ENCODE measurements at regions of chr6 and their contacts with region 1.

Region 1: GRCh38 chr6:25278914-25279747 is at the start of gene CARMIL1:
- DNase-seq: peak; percentile 99
- H3K4me3 Mint-ChIP-seq: peak within 1 kb of the TSS; percentile 76
- H3K27ac Mint-ChIP-seq: peak within 1 kb of the TSS; percentile 90
- H3K4me1 Mint-ChIP-seq: peaks cover 61% of the 10 kb centered on the region
- H3K27me3 Mint-ChIP-seq: no peaks in the 10 kb centered on the region
- CTCF ChIP-seq: peak; percentile 97
- total RNA-seq, gene CARMIL1: 88.4 and 92.4 TPM in 2 replicates

Region 2: GRCh38 chr6:25193460-25194171 is 85.5 kb before region 1 on chr6:
- CTCF ChIA-PET with region 1: interaction called, 17 read pairs
- intact Hi-C with region 1: no loop called
- DNase-seq: peak; percentile 76
- H3K4me3 Mint-ChIP-seq: peak overlapping the region; percentile 27
- H3K27ac Mint-ChIP-seq: peak overlapping the region; percentile 27
- H3K4me1 Mint-ChIP-seq: peaks cover 27% of the 10 kb centered on the region
- H3K27me3 Mint-ChIP-seq: no peaks in the 10 kb centered on the region
- CTCF ChIP-seq: no peak

Region 3: GRCh38 chr6:25297039-25297441 is 17.9 kb after region 1 on chr6:
- CTCF ChIA-PET with region 1: interaction called, 33 read pairs
- intact Hi-C with region 1: no loop called
- DNase-seq: no peak
- H3K4me3 Mint-ChIP-seq: no peak overlapping the region
- H3K27ac Mint-ChIP-seq: no peak overlapping the region
- H3K4me1 Mint-ChIP-seq: peaks cover 62% of the 10 kb centered on the region
- H3K27me3 Mint-ChIP-seq: no peaks in the 10 kb centered on the region
- CTCF ChIP-seq: no peak

Region 4: GRCh38 chr6:25334793-25335413 is 55.8 kb after region 1 on chr6:
- CTCF ChIA-PET with region 1: interaction called, 12 read pairs
- intact Hi-C with region 1: no loop called
- DNase-seq: no peak
- H3K4me3 Mint-ChIP-seq: no peak overlapping the region
- H3K27ac Mint-ChIP-seq: no peak overlapping the region
- H3K4me1 Mint-ChIP-seq: peaks cover 71% of the 10 kb centered on the region
- H3K27me3 Mint-ChIP-seq: no peaks in the 10 kb centered on the region
- CTCF ChIP-seq: no peak

Region 5: DNA sequence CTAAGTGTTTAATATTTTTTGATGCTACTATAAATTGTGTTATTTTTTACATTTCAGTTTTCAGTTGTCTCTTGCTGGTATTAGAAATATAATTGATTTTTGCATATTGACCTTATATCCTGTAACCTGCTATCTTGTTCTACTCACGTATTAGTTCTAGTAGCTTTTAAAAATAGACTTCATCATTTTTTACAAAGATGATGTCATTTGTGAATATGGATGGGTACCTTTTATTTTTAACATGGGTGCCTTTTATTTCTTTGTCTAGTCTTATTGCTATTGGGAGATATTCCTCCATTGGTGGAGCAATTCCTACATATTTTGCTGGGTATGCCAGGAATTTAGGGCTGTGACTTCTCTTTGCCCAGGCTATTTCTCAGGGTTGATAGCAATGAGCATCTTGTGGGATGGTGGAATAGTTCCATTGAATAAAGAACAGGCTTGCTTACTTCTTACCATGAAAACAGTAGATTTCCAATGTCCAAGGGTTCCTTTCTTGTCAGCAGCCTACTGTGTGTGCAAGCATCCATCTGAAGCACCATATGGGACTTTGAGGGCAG is 149.7 kb after region 1 on chr6:
- CTCF ChIA-PET with region 1: no interaction called
- intact Hi-C with region 1: loop called (anchors 5 kb)
- DNase-seq: no peak
- H3K4me3 Mint-ChIP-seq: no peak overlapping the region
- H3K27ac Mint-ChIP-seq: no peak overlapping the region
- H3K4me1 Mint-ChIP-seq: peaks cover 41% of the 10 kb centered on the region
- H3K27me3 Mint-ChIP-seq: no peaks in the 10 kb centered on the region
- CTCF ChIP-seq: no peak

Measured in Calu3 (cell line).